Sigmoid colon (tissue), 7 donors: ENCODE measurements at regions of chr13 and their contacts with region 1.

Region 1: GRCh38 chr13:30132623-30133553 is 174.5 kb downstream of the KATNAL1 start:
- DNase-seq: peak; percentile 99
- H3K4me3 ChIP-seq: peak overlapping the region in 1 of 4 donors; percentile 2
- H3K27ac ChIP-seq: peak overlapping the region in 3 of 4 donors; percentile 6 to 41 (median 7)
- H3K4me1 ChIP-seq: peaks cover 0 to 24% (median 15%) of the 10 kb centered on the region in 4 donors
- H3K27me3 ChIP-seq: no peaks in the 10 kb centered on the region
- CTCF ChIP-seq: peak; percentile 85 to 97 (median 94)
- EP300 ChIP-seq: no peak
- POLR2A ChIP-seq: no peak

Region 2: DNA sequence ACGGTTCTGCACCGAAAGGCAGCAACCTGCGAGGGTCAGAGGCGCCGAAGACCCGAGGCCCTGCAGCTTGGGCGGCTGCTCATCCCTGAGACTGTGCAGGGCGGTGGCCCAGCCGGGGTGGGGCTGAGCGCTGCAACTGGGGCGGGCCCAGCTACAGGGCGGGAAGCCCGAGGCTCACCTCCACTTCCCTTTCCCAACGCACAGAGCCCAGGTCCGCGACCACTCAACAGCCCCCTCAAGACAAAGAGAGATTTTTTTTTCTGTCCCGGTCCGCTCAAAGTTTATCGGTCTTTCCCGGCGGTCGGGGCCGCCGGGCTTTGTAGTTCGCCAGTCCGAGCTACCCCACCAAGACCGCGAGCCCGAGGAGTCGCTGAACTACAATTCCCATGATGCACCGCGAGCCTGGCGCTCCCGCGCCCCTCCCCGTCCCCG is 173.9 kb after region 1 on chr13:
- intact Hi-C with region 1: loop called (anchors 5 kb)
- DNase-seq: peak; percentile 97
- H3K4me3 ChIP-seq: peak overlapping the region; percentile 60 to 87 (median 82)
- H3K27ac ChIP-seq: peak overlapping the region; percentile 89 to 95 (median 94)
- H3K4me1 ChIP-seq: peaks cover 0 to 57% (median 38%) of the 10 kb centered on the region in 4 donors
- H3K27me3 ChIP-seq: no peaks in the 10 kb centered on the region
- CTCF ChIP-seq: no peak
- EP300 ChIP-seq: no peak
- POLR2A ChIP-seq: no peak

Region 3: DNA sequence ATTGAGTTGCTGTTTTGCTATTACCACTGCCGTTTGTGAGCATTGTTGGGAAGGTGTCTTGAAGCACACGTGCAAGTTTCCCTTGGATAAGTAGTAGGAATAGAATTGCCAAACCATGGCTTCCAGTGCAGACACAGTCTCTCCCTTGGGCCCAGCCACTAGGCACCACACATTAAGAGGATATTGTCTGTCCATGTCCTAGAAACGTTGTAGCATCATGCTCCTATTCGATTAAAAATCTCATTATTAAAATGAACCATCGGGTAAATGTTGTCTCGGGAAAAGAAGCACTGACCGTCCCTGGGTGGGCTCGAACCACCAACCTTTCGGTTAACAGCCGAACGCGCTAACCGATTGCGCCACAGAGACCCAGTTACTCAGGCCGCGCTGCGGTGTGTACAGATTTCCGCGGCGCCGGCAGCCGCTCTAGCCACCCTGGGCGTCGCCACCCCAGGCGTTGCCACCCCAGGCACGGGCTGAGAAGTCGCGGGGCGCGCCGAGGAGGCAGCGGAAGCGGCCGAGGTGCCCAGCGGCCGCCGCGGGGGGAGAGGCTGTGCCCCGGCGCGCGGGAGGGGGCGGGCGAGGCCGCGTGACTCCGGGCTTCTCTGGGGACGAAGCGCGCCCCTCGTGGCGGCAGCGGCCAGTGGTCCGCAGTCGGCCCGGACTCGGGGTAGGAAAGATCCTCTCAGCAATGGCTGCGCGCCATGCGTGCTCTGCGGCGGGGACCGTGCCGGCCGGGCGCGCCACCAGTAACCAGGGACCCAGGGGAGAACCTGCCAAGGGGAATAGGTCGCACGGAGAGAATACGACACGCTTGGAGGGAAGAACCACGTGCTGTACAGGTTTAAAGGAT is 541.0 kb after region 1 on chr13:
- intact Hi-C with region 1: loop called (anchors 5 kb)
- DNase-seq: peak; percentile 91
- H3K4me3 ChIP-seq: peak overlapping the region; percentile 18 to 61 (median 48)
- H3K27ac ChIP-seq: peak overlapping the region; percentile 74 to 83 (median 78)
- H3K4me1 ChIP-seq: peaks cover 0 to 11% (median 3%) of the 10 kb centered on the region in 4 donors
- H3K27me3 ChIP-seq: no peaks in the 10 kb centered on the region
- CTCF ChIP-seq: peak in 3 of 4 experiments; percentile 11 to 79 (median 49)
- EP300 ChIP-seq: no peak
- POLR2A ChIP-seq: no peak

Region 4: DNA sequence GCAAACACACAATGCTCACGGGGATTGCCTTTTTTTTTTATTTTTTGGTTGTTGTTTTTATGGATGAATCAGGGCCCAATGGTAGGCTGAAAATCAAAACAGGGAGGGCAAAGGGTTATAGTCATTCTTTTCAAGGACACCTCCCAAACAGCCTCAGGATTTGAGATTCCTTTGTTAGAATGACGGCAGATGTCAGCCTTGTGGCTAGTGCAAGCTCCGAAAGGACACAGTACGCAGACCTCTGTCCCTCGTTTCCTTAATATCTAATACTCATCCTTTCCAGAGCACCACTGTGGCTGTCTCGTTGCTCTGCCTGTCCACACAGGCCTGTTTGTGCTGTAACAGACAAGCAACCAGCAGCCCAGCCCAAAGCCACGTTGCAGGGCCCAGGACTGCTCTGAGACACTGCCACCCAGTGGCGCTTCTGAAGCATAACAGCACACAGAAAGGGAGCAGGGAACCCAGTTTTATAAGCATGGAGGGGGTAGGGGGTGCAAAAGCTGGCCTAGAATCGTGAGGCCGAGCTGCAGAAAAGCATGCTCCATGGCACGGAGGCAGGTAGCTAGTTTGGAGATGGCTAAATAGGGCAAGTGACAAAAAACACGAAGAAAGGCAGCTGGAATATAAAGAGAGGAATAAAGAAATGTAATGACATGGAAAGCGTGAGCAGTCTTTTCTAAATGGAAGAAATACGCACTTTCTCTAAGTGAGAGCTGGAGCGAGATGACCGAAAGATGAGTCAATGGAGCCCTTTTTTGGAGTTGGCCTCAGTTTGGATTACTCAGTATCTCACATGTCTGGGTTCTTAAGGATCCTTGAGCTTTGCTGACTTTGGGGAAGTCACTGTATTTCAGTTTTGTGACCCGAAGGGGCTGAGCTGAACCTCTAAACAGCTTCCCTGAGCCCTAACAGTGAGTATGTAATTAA is 732.5 kb after region 1 on chr13:
- intact Hi-C with region 1: loop called (anchors 5 kb)
- DNase-seq: peak; percentile 92
- H3K4me3 ChIP-seq: peak overlapping the region in 1 of 4 donors; percentile 17
- H3K27ac ChIP-seq: peak overlapping the region; percentile 73 to 87 (median 86)
- H3K4me1 ChIP-seq: peaks cover 0 to 77% (median 62%) of the 10 kb centered on the region in 4 donors
- H3K27me3 ChIP-seq: no peaks in the 10 kb centered on the region
- CTCF ChIP-seq: peak; percentile 86 to 97 (median 94)
- EP300 ChIP-seq: peak in 1 of 4 donors; percentile 1
- POLR2A ChIP-seq: no peak